Panc1 (cell line): ENCODE measurements at regions of chr10 and their contacts with region 1.

Region 1: GRCh38 chr10:4353964-4354363 is 472.0 kb upstream of the AKR1E2 start:
- DNase-seq: peak; percentile 77
- ATAC-seq: peak; percentile 83
- H3K4me3 ChIP-seq: no peak overlapping the region
- H3K27ac ChIP-seq: peak overlapping the region; percentile 96
- H3K4me1 ChIP-seq: peaks cover 24% of the 10 kb centered on the region
- H3K27me3 ChIP-seq: no peaks in the 10 kb centered on the region
- CTCF ChIP-seq: no peak

Region 2: DNA sequence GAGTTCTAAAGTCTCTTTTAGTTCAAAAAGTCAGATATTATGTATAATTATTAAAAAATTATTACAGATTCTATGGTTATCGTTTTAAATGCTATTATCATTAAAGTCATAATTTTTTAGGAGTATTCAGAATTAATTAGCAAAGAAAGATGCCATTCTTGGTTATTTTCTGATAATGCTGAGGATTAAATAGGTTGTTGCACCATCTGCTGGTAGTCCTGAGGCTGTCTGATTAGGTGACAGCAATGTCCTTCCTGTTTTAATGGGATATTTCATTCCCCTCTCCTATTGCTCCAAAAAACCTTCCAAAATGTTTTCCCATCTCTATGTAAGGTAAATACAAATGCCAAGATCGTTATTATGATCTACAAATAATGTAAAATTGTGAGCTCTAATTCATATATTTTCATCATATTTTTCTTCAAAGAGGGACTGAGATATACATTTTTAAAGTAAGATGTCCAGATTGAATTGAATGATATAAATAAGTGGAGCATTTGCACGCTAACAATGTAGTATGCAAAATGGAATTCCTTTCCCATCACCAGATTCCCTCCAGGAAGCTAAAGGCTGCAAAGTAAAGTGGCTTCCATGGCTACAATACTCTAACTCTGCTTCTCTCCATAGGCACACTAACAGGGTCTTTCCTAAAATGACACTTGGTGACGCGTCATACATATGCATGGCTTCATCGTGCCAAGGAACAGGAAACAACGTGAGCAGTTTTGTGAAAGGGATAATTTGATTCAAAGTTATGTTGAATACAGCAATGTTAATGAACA is 413.3 kb after region 1 on chr10:
- CTCF ChIA-PET with region 1: no interaction called
- POLR2A ChIA-PET with region 1: no interaction called
- in situ Hi-C with region 1: no loop called
- intact Hi-C with region 1: loop called (anchors 5 kb)
- DNase-seq: peak; percentile 36
- ATAC-seq: peak; percentile 60; the same call in 1 of the 2 replicates
- H3K4me3 ChIP-seq: no peak overlapping the region
- H3K27ac ChIP-seq: peak overlapping the region; percentile 90
- H3K4me1 ChIP-seq: peaks cover 22% of the 10 kb centered on the region
- H3K27me3 ChIP-seq: no peaks in the 10 kb centered on the region
- CTCF ChIP-seq: peak; percentile 57; the same call in 1 of the 2 replicates